Adrenal gland (tissue), 19 donors: ENCODE measurements at regions of chr1 and their contacts with region 1.

Region 1: GRCh38 chr1:100708476-100709062 is 11.0 kb upstream of the VCAM1 start:
- DNase-seq: no peak
- H3K4me3 ChIP-seq: no peak overlapping the region
- H3K27ac ChIP-seq: peak overlapping the region in 1 of 5 donors; percentile 51
- H3K4me1 ChIP-seq: peaks cover 22 to 46% of the 10 kb centered on the region in 2 donors
- H3K27me3 ChIP-seq: no peaks in the 10 kb centered on the region
- CTCF ChIP-seq: no peak
- POLR2A ChIP-seq: no peak

Region 2: GRCh38 chr1:100643471-100644196 is 64.9 kb before region 1 on chr1:
- intact Hi-C with region 1: loop called in 1 of 2 experiments (anchors 10 kb)
- DNase-seq: peak in 2 of 7 donors; percentile 27 to 32
- H3K4me3 ChIP-seq: no peak overlapping the region
- H3K27ac ChIP-seq: peak overlapping the region in 2 of 5 donors; percentile 25 to 66
- H3K4me1 ChIP-seq: peaks cover 9 to 12% of the 10 kb centered on the region in 2 donors
- H3K27me3 ChIP-seq: no peaks in the 10 kb centered on the region
- CTCF ChIP-seq: no peak
- POLR2A ChIP-seq: no peak